ENCODE measurements at regions of chr21 and their contacts with region 1.

Region 1: GRCh38 chr21:44939532-44940115 is at the start of gene SLX9:
- DNase-seq: no peak
- H3K4me3 ChIP-seq: peak within 1 kb of the TSS; percentile 89
- H3K27ac ChIP-seq: peak within 1 kb of the TSS; percentile 27
- H3K27me3 ChIP-seq: peaks cover 8% of the 10 kb centered on the region
- CTCF ChIP-seq: no peak

Region 2: DNA sequence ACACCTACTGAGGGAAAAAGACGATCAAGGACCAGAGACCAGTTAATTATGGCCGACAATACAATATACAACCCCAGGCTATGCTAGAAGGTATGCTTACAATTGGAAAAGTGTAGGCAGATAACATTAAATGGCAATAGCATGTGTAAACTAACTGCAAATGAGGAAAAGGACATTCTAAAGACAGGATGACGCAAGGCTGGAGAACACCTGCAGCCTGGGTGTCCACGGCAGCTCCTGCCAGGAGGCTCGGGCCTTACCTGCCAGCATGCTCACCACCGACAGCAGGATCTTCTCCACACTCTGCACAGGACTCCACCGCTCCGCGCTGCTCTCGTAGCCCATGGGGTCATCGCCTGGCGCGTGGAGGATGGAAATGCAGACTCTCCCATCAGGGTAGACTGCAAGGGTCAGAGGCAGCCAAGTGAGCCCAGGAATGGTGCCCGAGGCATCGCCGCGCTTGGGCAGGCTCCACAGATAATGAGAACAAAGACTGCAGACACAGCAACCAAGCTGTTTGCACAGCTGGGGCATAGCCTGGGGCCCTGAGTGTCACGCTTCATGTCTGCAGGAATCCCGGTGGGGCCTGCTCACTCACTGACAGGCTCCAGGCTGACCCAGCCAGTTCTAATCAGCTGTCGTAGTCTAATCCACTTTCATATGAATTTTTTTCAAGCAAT is 166.2 kb before region 1 on chr21:
- in situ Hi-C with region 1: no loop called
- DNase-seq: no peak
- H3K4me3 ChIP-seq: no peak overlapping the region
- H3K27ac ChIP-seq: no peak overlapping the region
- H3K27me3 ChIP-seq: no peaks in the 10 kb centered on the region
- CTCF ChIP-seq: no peak

Region 3: GRCh38 chr21:44845399-44846223 is 94.0 kb before region 1 on chr21:
- in situ Hi-C with region 1: no loop called
- DNase-seq: no peak
- H3K4me3 ChIP-seq: peak overlapping the region; percentile 33
- H3K27ac ChIP-seq: no peak overlapping the region
- H3K27me3 ChIP-seq: peaks cover 19% of the 10 kb centered on the region
- CTCF ChIP-seq: peak; percentile 46

Region 4: GRCh38 chr21:44881586-44881939 is 58.1 kb before region 1 on chr21:
- in situ Hi-C with region 1: no loop called
- DNase-seq: no peak
- H3K4me3 ChIP-seq: no peak overlapping the region
- H3K27ac ChIP-seq: no peak overlapping the region
- H3K27me3 ChIP-seq: peaks cover 4% of the 10 kb centered on the region
- CTCF ChIP-seq: no peak

Region 5: DNA sequence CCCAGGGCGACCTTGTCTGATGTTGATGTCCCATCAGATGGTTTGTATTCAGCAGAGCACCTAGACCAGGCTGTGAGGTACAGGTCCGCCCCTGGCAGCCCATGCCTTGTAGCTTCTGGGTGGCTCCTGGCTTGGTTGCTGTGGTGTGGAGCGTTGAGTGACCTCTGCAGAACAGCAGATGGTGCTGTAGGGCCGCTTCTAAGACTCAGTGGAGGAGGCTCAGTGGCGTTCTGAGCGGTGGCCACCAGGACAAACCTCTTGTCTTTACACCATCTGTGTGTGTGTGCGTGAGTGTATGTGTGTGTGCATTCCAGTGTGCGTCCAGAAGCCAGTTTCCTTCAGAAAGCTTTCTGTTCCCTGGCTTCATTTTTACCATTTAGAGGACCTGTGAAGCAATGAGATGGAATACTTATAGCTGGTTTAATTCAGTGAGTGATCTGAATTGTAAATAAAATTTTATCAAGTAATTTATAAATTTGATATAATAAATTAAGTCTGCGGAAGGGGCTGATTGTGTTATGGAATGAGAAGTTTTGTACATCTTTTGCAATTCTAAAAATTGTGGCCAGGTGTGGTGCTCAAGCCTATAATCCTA is 200.8 kb after region 1 on chr21:
- in situ Hi-C with region 1: loop called (anchors 25 kb)
- DNase-seq: peak; percentile 94
- H3K4me3 ChIP-seq: no peak overlapping the region
- H3K27ac ChIP-seq: no peak overlapping the region
- H3K27me3 ChIP-seq: no peaks in the 10 kb centered on the region
- CTCF ChIP-seq: peak; percentile 98

Measured in brain microvascular endothelial cell (primary cell).